AG04450 (cell line): ENCODE measurements at regions of chr2 and their contacts with region 1.

Region 1: DNA sequence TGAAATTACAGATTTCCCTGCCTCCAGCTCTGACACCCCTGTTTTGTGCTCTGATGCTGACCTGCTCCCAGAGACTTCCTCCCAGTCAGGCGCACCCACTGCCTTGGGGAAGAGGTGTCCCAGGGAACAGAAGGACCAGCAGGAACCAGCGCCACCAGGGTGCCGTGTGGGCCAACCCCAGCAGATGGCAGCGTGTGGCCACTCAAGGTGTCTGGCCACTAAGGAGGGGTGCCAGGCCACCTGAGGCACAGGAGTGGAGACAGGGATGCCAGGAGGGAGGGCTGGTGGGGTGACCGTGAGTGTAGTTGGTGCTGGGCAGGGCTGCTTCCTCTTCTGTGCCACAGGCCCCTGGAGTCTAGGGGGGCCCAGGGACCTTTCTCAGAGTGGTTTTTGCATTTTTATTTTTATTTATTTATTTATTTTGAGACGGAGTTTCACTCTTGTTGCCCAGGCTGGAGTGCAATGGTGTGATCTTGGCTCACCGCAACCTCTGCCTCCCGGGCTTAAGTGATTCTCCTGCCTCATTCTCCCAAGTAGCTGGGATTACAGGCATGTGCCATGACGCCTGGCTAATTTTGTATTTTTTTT is 56.0 kb downstream of the TEX44 start:
- DNase-seq: no peak
- H3K4me3 ChIP-seq: no peak overlapping the region
- H3K27ac ChIP-seq: no peak overlapping the region
- H3K27me3 ChIP-seq: no peaks in the 10 kb centered on the region
- CTCF ChIP-seq: peak; percentile 59

Region 2: GRCh38 chr2:231621129-231621879 is 27.4 kb before region 1 on chr2:
- CTCF ChIA-PET with region 1: interaction called, 10 read pairs
- POLR2A ChIA-PET with region 1: no interaction called
- DNase-seq: no peak
- H3K4me3 ChIP-seq: no peak overlapping the region
- H3K27ac ChIP-seq: no peak overlapping the region
- H3K27me3 ChIP-seq: no peaks in the 10 kb centered on the region
- CTCF ChIP-seq: no peak

Region 3: GRCh38 chr2:231696007-231696371 is 47.3 kb after region 1 on chr2:
- CTCF ChIA-PET with region 1: no interaction called
- POLR2A ChIA-PET with region 1: no interaction called
- DNase-seq: no peak
- H3K4me3 ChIP-seq: no peak overlapping the region
- H3K27ac ChIP-seq: peak overlapping the region; percentile 39
- H3K27me3 ChIP-seq: no peaks in the 10 kb centered on the region
- CTCF ChIP-seq: no peak